ENCODE measurements at regions of chr11 and their contacts with region 1.

Region 1: GRCh38 chr11:19539861-19540260 is 172.8 kb upstream of the NAV2 start:
- DNase-seq: no peak
- ATAC-seq: no peak
- H3K4me3 ChIP-seq: no peak overlapping the region
- H3K27ac ChIP-seq: no peak overlapping the region
- H3K4me1 ChIP-seq: no peaks in the 10 kb centered on the region
- H3K27me3 ChIP-seq: peaks cover 0 to 4% (median 0%) of the 10 kb centered on the region in 7 donors
- CTCF ChIP-seq: no peak

Region 2: DNA sequence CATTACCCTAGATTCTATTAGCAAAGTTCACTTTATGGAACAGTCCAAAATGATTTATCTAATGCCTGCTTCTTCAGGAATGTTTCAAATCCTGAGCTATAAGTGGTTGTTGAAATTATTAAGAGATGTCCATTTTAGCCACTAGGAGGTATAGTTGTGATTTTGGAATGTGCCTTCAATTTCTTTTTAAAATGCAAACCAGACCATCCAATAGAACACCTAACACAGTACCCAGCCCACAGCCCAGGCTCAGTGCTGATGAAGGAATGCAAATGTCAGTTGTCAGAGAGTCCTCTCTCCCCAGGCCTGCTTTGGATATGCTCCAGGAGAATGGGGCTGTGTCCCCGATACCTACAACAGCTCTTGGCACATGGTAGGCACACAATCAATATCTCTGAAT is 213.4 kb before region 1 on chr11:
- intact Hi-C with region 1: loop called in 1 of 10 experiments (anchors 5 kb)
- DNase-seq: no peak
- ATAC-seq: peak in 1 of 8 donors; percentile 19
- H3K4me3 ChIP-seq: no peak overlapping the region
- H3K27ac ChIP-seq: no peak overlapping the region
- H3K4me1 ChIP-seq: no peaks in the 10 kb centered on the region
- H3K27me3 ChIP-seq: peaks cover 0 to 6% (median 3%) of the 10 kb centered on the region in 7 donors
- CTCF ChIP-seq: peak in 7 of 9 donors; percentile 21 to 41 (median 32)

Measured in heart right ventricle (tissue), 16 donors.